ENCODE measurements at regions of chr17 and their contacts with region 1.

Region 1: GRCh38 chr17:60102632-60103096 is 23.9 kb upstream of the HEATR6 start:
- DNase-seq: no peak
- H3K4me3 ChIP-seq: no peak overlapping the region
- H3K27ac ChIP-seq: no peak overlapping the region
- H3K4me1 ChIP-seq: no peaks in the 10 kb centered on the region
- H3K27me3 ChIP-seq: no peaks in the 10 kb centered on the region
- CTCF ChIP-seq: no peak

Region 2: GRCh38 chr17:60563746-60564145 is 461.1 kb after region 1 on chr17:
- CTCF ChIA-PET with region 1: no interaction called
- dilution Hi-C with region 1: no loop called
- in situ Hi-C with region 1: no loop called
- intact Hi-C with region 1: loop called (anchors 10 kb)
- DNase-seq: no peak
- H3K4me3 ChIP-seq: no peak overlapping the region
- H3K27ac ChIP-seq: no peak overlapping the region
- H3K4me1 ChIP-seq: no peaks in the 10 kb centered on the region
- H3K27me3 ChIP-seq: no peaks in the 10 kb centered on the region
- CTCF ChIP-seq: no peak

Measured in mammary epithelial cell (primary cell).